Activated B cell treated with CpG ODN at 0.5 μM for 24 hours (primary cell): ENCODE measurements at regions of chr6 and their contacts with region 1.

Region 1: DNA sequence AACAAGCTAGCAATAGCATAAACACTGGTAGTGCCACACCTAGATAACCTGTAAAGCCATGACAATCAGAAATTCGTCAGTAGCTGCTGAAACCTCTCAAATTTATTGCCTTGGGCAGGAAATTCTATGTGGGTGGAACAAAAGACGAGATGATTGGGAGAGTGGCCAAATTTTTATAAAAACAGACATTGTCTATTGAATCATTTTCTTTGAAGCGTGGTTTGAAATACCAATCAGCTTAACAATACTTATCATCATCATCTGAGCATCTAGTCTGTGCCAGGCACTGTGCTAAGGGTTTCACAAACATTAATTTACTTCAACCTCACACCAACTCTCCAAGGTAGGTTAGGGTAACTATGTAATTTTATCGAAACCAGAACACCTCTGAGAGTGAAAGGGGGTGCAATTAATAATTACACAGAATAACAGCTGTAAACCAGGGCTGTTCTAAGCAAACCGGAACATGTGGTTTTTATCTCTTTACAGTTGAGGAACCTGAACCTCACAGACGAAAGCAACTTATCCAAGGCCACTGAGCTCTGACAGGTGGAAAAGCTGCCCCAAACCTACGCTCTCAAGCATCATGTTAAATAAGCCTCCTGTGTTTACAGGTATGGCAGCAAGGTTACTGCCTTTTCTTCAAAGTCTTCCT is 43.4 kb downstream of the NHSL1 start:
- DNase-seq: no peak
- ATAC-seq: peak; percentile 89
- H3K4me3 Mint-ChIP-seq: peak overlapping the region; percentile 57
- H3K27ac Mint-ChIP-seq: peak overlapping the region; percentile 56
- H3K4me1 Mint-ChIP-seq: peaks cover 23% of the 10 kb centered on the region
- H3K27me3 Mint-ChIP-seq: no peaks in the 10 kb centered on the region
- CTCF ChIP-seq: no peak

Region 2: GRCh38 chr6:137497721-137498463 is 958.0 kb before region 1 on chr6:
- CTCF ChIA-PET with region 1: no interaction called
- POLR2A ChIA-PET with region 1: no interaction called
- intact Hi-C with region 1: no loop called
- DNase-seq: peak; percentile 37
- ATAC-seq: peak; percentile 34
- H3K4me3 Mint-ChIP-seq: peak overlapping the region; percentile 66
- H3K27ac Mint-ChIP-seq: no peak overlapping the region
- H3K4me1 Mint-ChIP-seq: peaks cover 44% of the 10 kb centered on the region
- H3K27me3 Mint-ChIP-seq: peaks cover 61% of the 10 kb centered on the region
- CTCF ChIP-seq: no peak

Region 3: GRCh38 chr6:138161338-138162110 is 294.3 kb before region 1 on chr6 and contains the start of gene ARFGEF3:
- CTCF ChIA-PET with region 1: no interaction called
- POLR2A ChIA-PET with region 1: no interaction called
- intact Hi-C with region 1: no loop called
- DNase-seq: peak; percentile 41
- ATAC-seq: peak; percentile 94
- H3K4me3 Mint-ChIP-seq: peak within 1 kb of the TSS; percentile 74
- H3K27ac Mint-ChIP-seq: no peak within 1 kb of the TSS
- H3K4me1 Mint-ChIP-seq: peaks cover 15% of the 10 kb centered on the region
- H3K27me3 Mint-ChIP-seq: peaks cover 43% of the 10 kb centered on the region
- CTCF ChIP-seq: no peak
- total RNA-seq, gene ARFGEF3: 0.02 TPM in 2 replicates

Region 4: GRCh38 chr6:138499303-138500018 is 43.6 kb after region 1 on chr6 and contains the start of gene NHSL1:
- CTCF ChIA-PET with region 1: no interaction called
- POLR2A ChIA-PET with region 1: interaction called, 5 read pairs
- intact Hi-C with region 1: loop called (anchors 2 kb)
- DNase-seq: no peak
- ATAC-seq: peak; percentile 94
- H3K4me3 Mint-ChIP-seq: peak within 1 kb of the TSS; percentile 79
- H3K27ac Mint-ChIP-seq: peak within 1 kb of the TSS; percentile 55
- H3K4me1 Mint-ChIP-seq: peaks cover 19% of the 10 kb centered on the region
- H3K27me3 Mint-ChIP-seq: peaks cover 5% of the 10 kb centered on the region
- CTCF ChIP-seq: no peak
- total RNA-seq, gene NHSL1: 1.0 and 1.4 TPM in 2 replicates

Region 5: DNA sequence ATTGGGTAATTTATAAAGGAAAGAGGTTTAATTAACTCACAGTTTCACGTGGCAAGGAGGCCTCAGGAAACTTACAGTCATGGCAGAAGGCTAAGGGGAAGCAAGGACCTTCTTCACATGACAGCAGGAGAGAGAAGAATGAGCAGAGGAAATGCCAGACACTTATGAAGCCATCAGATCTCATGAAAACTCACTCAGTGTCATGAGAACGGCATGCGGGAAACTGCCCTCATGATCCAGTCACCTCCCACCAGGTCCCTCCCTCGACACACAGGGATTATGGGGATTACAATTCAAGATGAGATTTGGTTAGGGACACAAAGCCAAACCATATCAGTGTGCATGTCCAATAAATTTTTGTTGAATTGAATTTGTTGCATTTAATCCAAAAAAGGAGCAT is 392.0 kb after region 1 on chr6:
- CTCF ChIA-PET with region 1: no interaction called
- POLR2A ChIA-PET with region 1: interaction called, 10 read pairs
- intact Hi-C with region 1: no loop called
- DNase-seq: no peak
- ATAC-seq: no peak
- H3K4me3 Mint-ChIP-seq: no peak overlapping the region
- H3K27ac Mint-ChIP-seq: no peak overlapping the region
- H3K4me1 Mint-ChIP-seq: no peaks in the 10 kb centered on the region
- H3K27me3 Mint-ChIP-seq: no peaks in the 10 kb centered on the region
- CTCF ChIP-seq: no peak

Region 6: DNA sequence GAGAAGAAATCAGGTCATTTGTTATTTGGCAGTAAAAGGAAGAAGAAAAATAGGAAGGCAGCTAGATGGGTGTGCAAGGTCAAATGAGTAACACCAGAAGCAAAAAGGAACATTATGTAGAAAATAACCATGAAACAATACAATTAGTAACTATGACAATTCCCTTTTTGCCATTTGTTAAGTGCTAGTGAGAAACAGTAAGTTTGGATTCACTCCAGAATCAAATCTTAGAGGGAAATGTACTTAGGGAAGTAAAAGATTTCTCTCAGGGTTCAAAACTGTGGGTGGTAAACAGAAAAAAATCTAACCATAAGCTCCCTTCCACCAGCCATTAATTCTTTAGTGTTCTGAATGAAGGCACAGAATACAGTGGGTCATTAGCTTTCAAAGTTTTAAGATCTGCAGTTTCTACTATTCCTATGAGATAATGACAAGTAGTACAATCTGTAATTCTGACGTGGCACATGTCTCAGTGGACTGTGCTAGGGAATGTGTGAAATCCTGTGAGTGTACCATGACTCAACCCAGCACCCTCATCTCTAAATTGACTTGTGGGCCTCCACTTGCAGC is 515.1 kb after region 1 on chr6:
- CTCF ChIA-PET with region 1: no interaction called
- POLR2A ChIA-PET with region 1: no interaction called
- intact Hi-C with region 1: no loop called
- DNase-seq: no peak
- ATAC-seq: peak; percentile 25
- H3K4me3 Mint-ChIP-seq: no peak overlapping the region
- H3K27ac Mint-ChIP-seq: no peak overlapping the region
- H3K4me1 Mint-ChIP-seq: peaks cover 53% of the 10 kb centered on the region
- H3K27me3 Mint-ChIP-seq: no peaks in the 10 kb centered on the region
- CTCF ChIP-seq: no peak